Activated T-helper 1 cell treated with anti-CD3 and anti-CD28 coated beads, Interleukin-12 subunit alpha, Interleukin-12 subunit beta, Interleukin-2, Interleukin-4 antibody, amounts not matched to agents 30 ng/mL and 10 ng/mL and 1 ng/mL, durations not matched to agents 14 hours and 24 hours and 36 hours (primary cell): ENCODE measurements at regions of chr15 and their contacts with region 1.

Region 1: GRCh38 chr15:100341662-100342560 is at the start of gene ADAMTS17:
- DNase-seq: peak; percentile 90
- H3K4me3 Mint-ChIP-seq: peak within 1 kb of the TSS; percentile 59
- H3K27ac Mint-ChIP-seq: no peak within 1 kb of the TSS
- H3K4me1 Mint-ChIP-seq: no peaks in the 10 kb centered on the region
- H3K27me3 Mint-ChIP-seq: peaks cover 40% of the 10 kb centered on the region
- total RNA-seq, gene ADAMTS17: 0.83 and 1.3 TPM in 2 replicates

Region 2: GRCh38 chr15:99275525-99276128 is 1066.3 kb before region 1 on chr15:
- intact Hi-C with region 1: loop called (anchors 10 kb)
- DNase-seq: no peak
- H3K4me3 Mint-ChIP-seq: no peak overlapping the region
- H3K27ac Mint-ChIP-seq: no peak overlapping the region
- H3K4me1 Mint-ChIP-seq: peaks cover 34% of the 10 kb centered on the region
- H3K27me3 Mint-ChIP-seq: no peaks in the 10 kb centered on the region

Region 3: DNA sequence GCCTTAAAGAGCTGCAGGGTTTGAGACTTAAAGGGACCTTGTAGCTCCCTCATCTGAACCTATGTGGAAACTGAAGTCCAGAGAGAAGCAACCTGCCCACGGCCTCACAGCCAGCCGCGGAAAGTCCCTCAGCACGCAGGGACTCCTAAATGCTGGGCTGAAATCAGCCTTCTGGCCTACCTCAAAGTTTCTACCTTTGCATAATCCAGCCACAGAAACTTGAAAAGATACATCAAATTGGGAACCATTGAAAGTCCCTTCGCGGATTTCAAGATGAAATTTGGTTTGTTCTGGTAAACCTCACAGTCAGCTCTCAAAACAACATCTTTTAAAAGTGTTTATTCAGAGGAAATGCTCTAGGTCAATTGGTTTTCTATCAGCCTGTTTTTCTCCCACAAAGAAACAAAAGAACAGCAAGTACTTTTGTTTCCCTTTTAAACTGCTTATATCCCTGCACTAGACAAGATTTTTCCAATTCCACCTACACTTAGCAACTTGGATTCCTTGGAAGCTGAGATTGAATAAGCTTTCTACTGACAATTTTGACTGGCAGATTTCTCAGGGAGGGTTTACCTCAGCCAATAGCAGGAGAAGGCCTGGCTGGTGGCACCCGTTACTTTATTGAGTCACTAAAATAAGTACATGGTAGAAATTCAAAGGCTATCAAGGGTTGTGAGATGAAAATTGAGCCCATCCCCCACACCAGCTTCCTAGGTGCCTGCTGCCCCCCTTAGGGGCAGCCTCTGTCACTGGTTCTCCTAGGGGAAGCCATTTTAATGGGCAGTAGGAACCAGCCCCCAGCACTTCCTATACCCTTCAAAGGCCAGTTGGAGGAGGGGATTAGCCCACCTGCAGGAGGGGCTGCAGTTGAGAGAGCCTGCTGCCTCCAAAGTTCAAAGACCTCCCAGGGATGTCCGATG is 171.4 kb before region 1 on chr15:
- intact Hi-C with region 1: loop called (anchors 2 kb)
- DNase-seq: peak; percentile 43
- H3K4me3 Mint-ChIP-seq: no peak overlapping the region
- H3K27ac Mint-ChIP-seq: peak overlapping the region; percentile 83
- H3K4me1 Mint-ChIP-seq: peaks cover 15% of the 10 kb centered on the region
- H3K27me3 Mint-ChIP-seq: peaks cover 1% of the 10 kb centered on the region

Region 4: DNA sequence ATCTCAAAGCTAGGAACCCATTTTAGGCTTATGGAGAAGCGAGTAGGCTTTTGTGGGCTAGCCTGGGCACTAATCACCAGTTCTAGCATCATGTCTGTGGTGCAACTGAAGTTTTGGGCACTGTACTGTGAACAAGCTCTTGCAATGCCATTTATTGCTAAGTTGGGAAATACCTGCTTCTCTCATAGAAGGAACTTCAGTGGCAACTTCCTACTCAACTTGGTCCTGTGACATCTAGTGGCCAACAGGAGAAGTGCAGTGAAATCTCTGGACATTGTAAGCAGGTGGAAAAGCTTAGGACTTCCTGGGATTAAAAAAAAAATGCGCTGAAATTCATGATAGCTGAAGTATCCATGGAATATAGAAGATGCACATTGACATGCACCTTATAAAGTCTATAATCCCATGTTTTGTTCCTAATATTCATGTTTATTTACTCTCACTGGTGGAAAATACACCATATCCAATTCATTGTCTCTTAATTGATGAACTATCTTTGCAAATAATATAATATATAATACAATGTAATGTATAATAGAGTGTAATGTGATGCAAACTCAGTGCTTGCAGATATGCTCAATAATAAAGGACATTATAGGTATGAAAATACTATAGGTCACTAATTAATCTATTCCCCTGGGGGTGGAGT is 531.2 kb after region 1 on chr15:
- intact Hi-C with region 1: loop called (anchors 2 kb)
- DNase-seq: peak; percentile 32
- H3K4me3 Mint-ChIP-seq: no peak overlapping the region
- H3K27ac Mint-ChIP-seq: no peak overlapping the region
- H3K4me1 Mint-ChIP-seq: no peaks in the 10 kb centered on the region
- H3K27me3 Mint-ChIP-seq: peaks cover 35% of the 10 kb centered on the region